ENCODE measurements at regions of chr3 and their contacts with region 1.

Region 1: DNA sequence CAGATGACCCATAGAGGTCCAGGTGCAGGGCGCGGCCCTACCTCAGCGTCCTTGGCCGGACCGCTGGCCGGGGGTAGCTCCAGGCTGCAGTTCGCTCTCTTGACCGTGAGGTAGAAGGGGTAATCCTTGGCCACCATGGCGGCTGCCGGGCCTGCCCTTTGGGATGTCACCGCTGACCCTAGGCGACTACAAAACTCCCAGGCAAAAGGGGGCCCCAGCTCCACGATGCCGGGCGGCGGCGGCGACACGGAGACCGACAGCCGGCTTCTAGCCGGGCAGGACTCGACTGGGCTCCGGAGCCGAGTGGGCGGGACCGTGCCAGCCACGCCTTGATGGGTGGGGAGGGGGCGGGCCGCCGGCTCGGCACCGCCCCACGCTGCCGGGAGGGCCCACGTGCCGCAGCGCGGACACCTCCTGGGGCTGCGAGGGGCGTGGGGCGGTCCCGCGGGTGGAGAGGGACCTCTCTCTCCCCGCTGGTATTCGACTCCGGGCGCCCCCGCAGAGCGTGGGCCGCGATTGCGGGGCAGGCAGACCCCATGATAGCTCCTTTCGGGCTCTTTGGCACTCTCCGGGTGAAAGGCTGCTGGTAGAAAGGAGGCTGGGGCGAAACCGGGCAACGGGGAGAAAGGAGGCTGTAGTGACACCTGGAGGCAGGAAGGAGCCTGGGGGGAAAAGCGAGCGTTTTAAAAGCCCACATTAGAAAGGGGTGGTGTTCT is at the start of gene ARHGEF3:
- DNase-seq: peak; percentile 86 to 92
- ATAC-seq: peak; percentile 95 to 97 (median 96)
- H3K4me3 ChIP-seq: peak within 1 kb of the TSS; percentile 92
- H3K27ac ChIP-seq: peak within 1 kb of the TSS; percentile 80
- H3K4me1 ChIP-seq: peaks cover 35% of the 10 kb centered on the region
- H3K27me3 ChIP-seq: no peaks in the 10 kb centered on the region
- CTCF ChIP-seq: peak; percentile 35
- total RNA-seq, gene ARHGEF3: 6.3 to 10.4 (median 7.0) TPM

Region 2: DNA sequence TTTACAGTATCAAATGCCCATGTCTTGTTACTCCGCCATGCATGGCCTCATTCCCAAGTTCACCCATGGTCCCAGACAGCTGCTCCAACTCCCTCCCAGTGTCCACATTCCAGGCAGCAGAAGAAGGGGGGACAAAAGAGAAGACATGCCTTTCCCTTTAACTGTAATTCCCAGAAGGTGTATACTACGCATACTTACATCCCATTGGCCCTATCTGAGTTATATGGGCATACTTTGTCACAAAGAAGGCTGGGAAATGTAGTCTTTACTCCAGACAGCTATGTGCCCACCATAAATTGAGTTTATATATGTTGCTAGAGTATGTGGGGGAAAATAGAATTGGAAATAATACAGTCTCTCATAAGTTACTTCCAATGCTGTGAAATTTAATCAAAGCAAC is 404.0 kb before region 1 on chr3:
- intact Hi-C with region 1: no loop called
- DNase-seq: no peak
- ATAC-seq: no peak
- H3K4me3 ChIP-seq: no peak overlapping the region
- H3K27ac ChIP-seq: no peak overlapping the region
- H3K4me1 ChIP-seq: no peaks in the 10 kb centered on the region
- H3K27me3 ChIP-seq: peaks cover 0 to 3% (median 0%) of the 10 kb centered on the region in 3 donors
- CTCF ChIP-seq: no peak

Region 3: DNA sequence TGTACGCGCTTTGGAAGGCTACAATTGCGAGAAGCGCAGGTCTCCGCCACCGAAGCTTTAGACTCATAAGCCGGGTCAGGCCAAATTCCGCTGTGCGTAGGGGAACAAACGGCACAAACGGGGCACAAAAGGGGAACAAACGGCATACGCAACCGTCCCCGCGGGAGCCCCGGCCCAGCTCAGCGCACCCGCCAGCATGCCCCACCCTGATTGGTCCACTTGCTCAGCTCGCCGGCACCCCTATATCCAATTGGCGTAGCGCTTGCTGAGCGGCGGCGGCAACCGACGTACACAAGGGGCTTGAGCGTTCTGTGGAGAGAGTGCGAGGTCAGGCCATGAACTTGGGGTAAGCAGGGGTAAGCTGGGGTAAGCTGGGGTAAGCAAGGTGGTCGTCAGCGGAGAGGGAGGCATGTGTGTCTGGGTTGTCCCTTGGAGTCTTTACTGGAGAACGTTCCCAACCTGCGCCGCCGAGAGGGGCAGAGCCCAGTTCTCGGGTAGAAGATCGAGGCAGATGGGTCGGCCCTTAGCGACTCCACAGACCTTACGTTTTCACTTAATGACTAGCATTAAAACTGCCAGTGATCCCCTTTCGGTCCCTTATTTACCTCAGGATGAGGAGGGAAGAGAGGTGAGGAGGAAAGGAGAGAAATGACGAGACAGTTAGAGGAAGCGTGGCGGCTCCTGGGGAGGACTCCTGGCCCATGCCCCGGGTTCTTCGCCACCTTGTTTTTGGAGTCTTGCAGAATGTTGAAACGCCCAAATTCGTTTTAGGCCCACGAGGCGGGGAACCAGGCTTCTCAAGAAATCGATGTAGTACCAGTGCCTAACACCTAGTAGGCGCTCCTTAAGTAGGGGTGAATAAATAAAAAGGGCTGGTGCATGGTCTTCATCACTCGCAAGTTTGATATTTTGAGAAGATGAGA is 244.7 kb before region 1 on chr3 and contains the start of gene CCDC66:
- intact Hi-C with region 1: loop called in 1 of 2 experiments (anchors 5 kb)
- DNase-seq: peak; percentile 95 to 98
- ATAC-seq: peak; percentile 100
- H3K4me3 ChIP-seq: peak within 1 kb of the TSS; percentile 80
- H3K27ac ChIP-seq: peak within 1 kb of the TSS; percentile 85
- H3K4me1 ChIP-seq: peaks cover 10% of the 10 kb centered on the region
- H3K27me3 ChIP-seq: no peaks in the 10 kb centered on the region
- CTCF ChIP-seq: peak; percentile 74
- total RNA-seq, gene CCDC66: 7.5 to 14.8 (median 10.2) TPM

Region 4: GRCh38 chr3:56702490-56703315 is 99.1 kb before region 1 on chr3:
- intact Hi-C with region 1: loop called (anchors 1 kb)
- DNase-seq: no peak
- ATAC-seq: peak; percentile 68 to 89 (median 74)
- H3K4me3 ChIP-seq: no peak overlapping the region
- H3K27ac ChIP-seq: no peak overlapping the region
- H3K4me1 ChIP-seq: no peaks in the 10 kb centered on the region
- H3K27me3 ChIP-seq: peaks cover 0 to 3% (median 0%) of the 10 kb centered on the region in 3 donors
- CTCF ChIP-seq: peak; percentile 92

Region 5: DNA sequence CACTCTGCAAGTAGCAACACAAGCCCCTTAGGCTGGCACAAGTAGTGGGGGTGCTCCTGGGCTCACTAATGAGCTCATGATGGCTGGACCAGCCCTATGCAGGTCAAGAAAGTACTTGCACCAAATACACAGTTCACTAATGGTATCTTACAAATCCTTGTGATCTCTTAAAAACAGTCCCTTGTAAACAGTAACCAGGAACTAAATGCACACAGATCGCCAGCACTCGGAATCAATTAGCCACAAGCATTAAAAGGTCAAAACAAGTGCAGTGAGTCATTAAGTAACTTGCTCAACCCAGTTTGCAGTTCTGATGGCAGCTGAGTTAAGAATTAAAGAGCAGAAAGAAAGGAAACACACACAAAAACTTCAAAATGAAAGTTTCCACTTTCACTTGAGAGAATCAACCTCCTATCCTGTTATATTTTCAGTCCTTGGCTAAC is 43.3 kb before region 1 on chr3:
- intact Hi-C with region 1: loop called (anchors 5 kb)
- DNase-seq: no peak
- ATAC-seq: peak; percentile 37 to 70 (median 50)
- H3K4me3 ChIP-seq: no peak overlapping the region
- H3K27ac ChIP-seq: peak overlapping the region; percentile 62
- H3K4me1 ChIP-seq: peaks cover 42% of the 10 kb centered on the region
- H3K27me3 ChIP-seq: no peaks in the 10 kb centered on the region
- CTCF ChIP-seq: no peak

Region 6: DNA sequence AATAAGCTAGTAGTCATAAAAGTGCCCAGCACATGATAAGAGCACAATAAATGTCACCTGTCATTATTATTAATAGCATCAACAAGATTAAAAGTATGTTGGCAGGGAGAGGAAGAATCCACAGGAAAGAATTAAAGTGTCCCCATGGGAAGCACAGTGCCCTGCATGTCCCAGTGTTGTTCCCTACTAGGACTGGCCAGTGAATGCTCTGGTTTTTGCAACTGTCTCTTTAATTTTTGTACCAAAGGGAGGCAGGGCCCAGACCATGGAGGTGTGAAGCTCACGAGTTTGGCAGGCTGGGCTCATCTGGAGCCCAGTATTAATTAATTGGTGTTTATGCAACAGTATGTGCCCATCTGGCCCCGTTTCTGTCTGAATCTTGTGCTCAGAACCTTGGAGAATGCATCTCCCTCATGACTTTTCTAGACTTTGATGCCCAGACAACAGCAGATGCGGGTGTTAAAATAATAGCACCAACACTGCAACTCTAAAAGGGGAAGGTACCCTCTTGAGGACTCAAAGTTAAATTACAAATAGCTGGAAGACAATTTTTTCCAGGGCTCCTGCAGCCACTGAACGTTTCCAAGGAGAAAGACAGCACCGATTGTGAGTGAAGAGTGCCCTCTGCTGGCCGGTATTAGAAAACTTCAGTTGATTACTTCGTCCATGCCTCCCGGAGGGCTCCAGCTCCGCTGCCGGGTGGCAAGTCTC is 186.8 kb after region 1 on chr3:
- intact Hi-C with region 1: loop called (anchors 2 to 5 kb)
- DNase-seq: peak; percentile 60 to 81
- ATAC-seq: peak; percentile 84 to 94 (median 86)
- H3K4me3 ChIP-seq: no peak overlapping the region
- H3K27ac ChIP-seq: no peak overlapping the region
- H3K4me1 ChIP-seq: no peaks in the 10 kb centered on the region
- H3K27me3 ChIP-seq: peaks cover 0 to 6% (median 0%) of the 10 kb centered on the region in 3 donors
- CTCF ChIP-seq: peak; percentile 87